ENCODE measurements at regions of chr4 and their contacts with region 1.

Region 1: DNA sequence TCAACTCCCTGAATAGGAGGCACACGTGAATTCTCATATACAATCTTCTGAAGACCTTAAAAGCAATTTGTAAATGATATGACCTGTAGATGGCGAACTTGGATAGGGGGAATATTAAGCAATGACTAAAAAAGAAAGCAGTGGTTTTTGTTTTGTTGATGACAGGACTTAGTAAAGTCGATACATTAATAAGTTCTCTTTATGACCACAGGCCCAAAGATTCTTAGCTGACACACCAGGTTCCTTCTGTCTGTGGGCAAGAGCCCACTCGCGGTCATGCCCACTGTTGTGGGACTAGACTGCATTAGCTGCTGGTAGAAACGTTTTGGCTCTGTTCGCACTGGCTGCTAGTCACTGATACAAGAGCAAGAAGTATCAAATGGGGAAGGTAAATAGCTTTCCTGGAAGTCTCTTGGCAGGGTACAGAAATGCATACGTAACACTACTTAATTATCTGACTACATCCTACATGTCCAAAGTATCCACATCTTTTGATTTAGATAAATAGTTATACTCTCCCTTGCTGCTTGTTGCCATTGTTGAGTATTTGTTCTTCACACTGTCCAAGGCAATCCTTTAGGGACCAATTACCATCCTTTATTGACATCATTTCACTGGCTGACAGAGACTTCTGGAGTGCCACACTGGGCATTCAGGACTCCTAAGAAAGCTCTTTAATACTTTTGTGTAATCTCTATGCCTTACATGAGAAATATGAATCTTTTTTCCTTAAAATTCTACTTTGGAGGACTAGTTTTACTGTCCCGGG is 31.0 kb downstream of the ALPK1 start:
- DNase-seq: peak; percentile 60
- H3K4me3 Mint-ChIP-seq: no peak overlapping the region
- H3K27ac Mint-ChIP-seq: no peak overlapping the region
- H3K4me1 Mint-ChIP-seq: no peaks in the 10 kb centered on the region
- H3K27me3 Mint-ChIP-seq: no peaks in the 10 kb centered on the region
- CTCF ChIP-seq: peak; percentile 42

Region 2: DNA sequence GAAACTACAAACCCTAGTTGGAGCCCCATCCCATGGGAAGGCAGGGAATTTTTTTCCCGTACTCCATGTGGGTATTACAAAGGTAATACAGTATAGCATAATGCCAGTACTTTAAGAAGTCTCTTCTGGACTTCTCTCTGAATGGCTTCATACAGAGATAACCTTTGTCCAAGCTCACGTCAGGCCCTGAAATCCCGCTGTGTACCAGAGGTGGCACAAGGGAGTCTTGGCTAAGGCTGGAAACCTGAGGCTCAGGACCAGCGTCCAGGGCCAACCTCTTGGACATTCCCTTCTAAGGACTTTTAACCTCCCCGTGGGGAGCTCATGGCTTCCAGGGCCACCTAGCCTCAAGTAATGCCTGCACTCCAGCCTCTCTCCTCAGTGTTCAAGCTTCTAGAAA is 521.8 kb before region 1 on chr4:
- CTCF ChIA-PET with region 1: no interaction called
- POLR2A ChIA-PET with region 1: no interaction called
- intact Hi-C with region 1: no loop called
- DNase-seq: peak; percentile 38
- H3K4me3 Mint-ChIP-seq: no peak overlapping the region
- H3K27ac Mint-ChIP-seq: no peak overlapping the region
- H3K4me1 Mint-ChIP-seq: no peaks in the 10 kb centered on the region
- H3K27me3 Mint-ChIP-seq: peaks cover 61% of the 10 kb centered on the region
- CTCF ChIP-seq: peak; percentile 30

Region 3: GRCh38 chr4:112312610-112313239 is 15.4 kb before region 1 on chr4:
- CTCF ChIA-PET with region 1: interaction called, 14 read pairs
- POLR2A ChIA-PET with region 1: interaction called, 4 read pairs
- intact Hi-C with region 1: no loop called
- DNase-seq: no peak
- H3K4me3 Mint-ChIP-seq: no peak overlapping the region
- H3K27ac Mint-ChIP-seq: no peak overlapping the region
- H3K4me1 Mint-ChIP-seq: no peaks in the 10 kb centered on the region
- H3K27me3 Mint-ChIP-seq: no peaks in the 10 kb centered on the region
- CTCF ChIP-seq: no peak

Region 4: GRCh38 chr4:112340027-112340426 is 11.9 kb after region 1 on chr4:
- CTCF ChIA-PET with region 1: interaction called, 13 read pairs
- POLR2A ChIA-PET with region 1: no interaction called
- intact Hi-C with region 1: no loop called
- DNase-seq: no peak
- H3K4me3 Mint-ChIP-seq: no peak overlapping the region
- H3K27ac Mint-ChIP-seq: no peak overlapping the region
- H3K4me1 Mint-ChIP-seq: no peaks in the 10 kb centered on the region
- H3K27me3 Mint-ChIP-seq: no peaks in the 10 kb centered on the region
- CTCF ChIP-seq: no peak

Region 5: DNA sequence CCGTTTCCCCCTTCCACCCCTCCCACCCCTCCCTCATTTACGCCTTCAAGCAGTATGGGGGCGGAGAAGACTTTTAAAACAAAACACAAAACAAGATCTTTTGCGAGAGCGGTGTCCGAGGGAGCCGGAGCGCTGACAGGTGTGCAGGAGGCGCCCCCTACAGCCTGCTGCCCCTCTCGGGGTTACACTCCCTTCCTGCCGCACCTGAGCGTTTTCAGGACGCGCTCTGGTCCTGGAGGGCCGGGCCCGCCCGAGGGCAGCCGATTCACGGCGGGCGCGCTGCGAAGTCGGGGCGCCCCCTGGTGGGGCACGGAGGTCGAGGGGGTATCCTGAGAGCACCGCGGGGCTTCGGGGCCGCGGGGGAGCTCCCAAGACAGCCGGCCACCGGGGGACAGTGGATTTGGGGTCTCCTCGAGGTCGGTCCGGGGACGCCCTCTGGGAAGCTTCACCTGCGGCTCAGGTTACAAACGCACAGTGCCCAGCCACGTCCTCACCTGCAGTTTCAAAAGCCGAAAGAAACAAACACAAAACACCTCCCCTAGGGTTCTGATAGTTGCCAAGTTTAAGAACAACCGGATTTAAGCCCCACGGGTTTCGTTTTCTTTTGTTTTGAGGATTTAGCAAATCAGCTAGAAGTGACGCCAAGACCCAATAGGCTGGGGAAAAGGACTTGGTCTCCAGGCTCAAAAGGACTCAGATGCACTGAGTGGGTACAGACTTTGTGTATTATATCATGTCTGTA is 195.8 kb after region 1 on chr4:
- CTCF ChIA-PET with region 1: interaction called, 77 read pairs
- POLR2A ChIA-PET with region 1: no interaction called
- intact Hi-C with region 1: loop called (anchors 1 kb)
- DNase-seq: peak; percentile 62
- H3K4me3 Mint-ChIP-seq: peak overlapping the region; percentile 69
- H3K27ac Mint-ChIP-seq: no peak overlapping the region
- H3K4me1 Mint-ChIP-seq: no peaks in the 10 kb centered on the region
- H3K27me3 Mint-ChIP-seq: peaks cover 20% of the 10 kb centered on the region
- CTCF ChIP-seq: peak; percentile 87

Region 6: DNA sequence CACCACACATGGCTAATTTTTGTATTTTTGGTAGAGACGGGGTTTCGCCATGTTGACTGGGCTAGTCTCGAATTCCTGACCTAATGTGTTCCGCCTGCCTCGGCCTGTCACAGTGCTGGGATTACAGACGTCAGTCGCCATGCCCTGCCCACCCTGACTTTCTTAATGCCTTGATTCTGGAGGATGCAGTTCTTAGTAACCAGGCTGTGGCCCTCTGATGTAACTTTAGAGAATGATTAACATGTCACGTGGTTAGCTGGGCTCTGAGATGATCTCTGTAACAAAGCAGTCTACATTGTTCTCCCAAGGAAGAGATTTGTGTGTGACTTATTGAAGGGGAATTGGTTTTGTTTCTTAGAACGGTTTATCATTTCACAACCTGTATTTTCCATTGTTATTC is 751.9 kb after region 1 on chr4:
- CTCF ChIA-PET with region 1: no interaction called
- POLR2A ChIA-PET with region 1: no interaction called
- intact Hi-C with region 1: no loop called
- DNase-seq: peak; percentile 36
- H3K4me3 Mint-ChIP-seq: no peak overlapping the region
- H3K27ac Mint-ChIP-seq: no peak overlapping the region
- H3K4me1 Mint-ChIP-seq: no peaks in the 10 kb centered on the region
- H3K27me3 Mint-ChIP-seq: no peaks in the 10 kb centered on the region
- CTCF ChIP-seq: no peak

Measured in MCF 10A (cell line).